ENCODE measurements at regions of chr16 and their contacts with region 1.

Region 1: GRCh38 chr16:3182608-3183444 is 5.2 kb upstream of the OR1F1 start:
- DNase-seq: peak in 1 of 2 experiments; percentile 60
- H3K4me3 ChIP-seq: peak overlapping the region; percentile 71
- H3K27ac ChIP-seq: no peak overlapping the region
- H3K4me1 ChIP-seq: 0 out of 2 replicates have a peak, but pooled peaks cover 5% of the 10 kb centered on the region
- H3K27me3 ChIP-seq: no peaks in the 10 kb centered on the region
- CTCF ChIP-seq: peak; percentile 57

Region 2: DNA sequence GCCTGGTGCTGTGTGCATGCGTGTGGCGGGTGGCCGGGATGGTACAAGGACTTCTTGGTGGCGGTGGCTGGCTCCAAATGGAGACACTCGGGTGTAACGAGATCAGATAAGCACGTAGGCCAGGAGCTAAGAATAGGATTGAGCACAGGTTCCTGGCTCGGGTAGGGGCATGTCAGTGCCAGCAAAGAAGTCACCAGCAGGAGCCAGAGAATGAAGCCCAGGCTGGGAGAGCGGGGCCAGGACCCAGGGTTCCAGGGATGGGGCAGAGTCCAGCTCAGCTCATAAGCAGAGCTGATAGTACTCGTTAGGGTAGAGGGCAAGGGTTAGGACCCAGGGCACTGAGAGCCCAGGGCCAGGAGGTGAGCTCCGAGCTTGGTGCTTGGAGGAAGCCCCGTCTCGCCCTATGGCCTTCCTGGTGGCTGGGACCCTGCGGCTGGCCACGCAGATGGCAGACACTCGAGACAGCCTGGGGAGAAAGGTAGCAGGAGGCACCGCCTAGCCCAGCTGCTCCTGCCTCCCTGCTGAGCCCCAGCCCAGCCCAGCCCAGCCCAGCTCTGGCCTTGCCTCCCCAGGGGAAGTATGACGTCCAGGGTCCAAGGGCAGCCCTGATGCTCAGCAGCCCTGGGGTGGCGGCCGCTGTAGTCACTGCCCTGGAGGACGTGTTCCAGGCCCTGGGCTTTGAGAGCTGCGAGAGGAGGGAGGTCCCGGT is 39.1 kb before region 1 on chr16:
- CTCF ChIA-PET with region 1: no interaction called
- POLR2A ChIA-PET with region 1: no interaction called
- intact Hi-C with region 1: no loop called
- DNase-seq: peak in 1 of 2 experiments; percentile 5
- H3K4me3 ChIP-seq: no peak overlapping the region
- H3K27ac ChIP-seq: no peak overlapping the region
- H3K4me1 ChIP-seq: no peaks in the 10 kb centered on the region
- H3K27me3 ChIP-seq: no peaks in the 10 kb centered on the region
- CTCF ChIP-seq: no peak

Region 3: DNA sequence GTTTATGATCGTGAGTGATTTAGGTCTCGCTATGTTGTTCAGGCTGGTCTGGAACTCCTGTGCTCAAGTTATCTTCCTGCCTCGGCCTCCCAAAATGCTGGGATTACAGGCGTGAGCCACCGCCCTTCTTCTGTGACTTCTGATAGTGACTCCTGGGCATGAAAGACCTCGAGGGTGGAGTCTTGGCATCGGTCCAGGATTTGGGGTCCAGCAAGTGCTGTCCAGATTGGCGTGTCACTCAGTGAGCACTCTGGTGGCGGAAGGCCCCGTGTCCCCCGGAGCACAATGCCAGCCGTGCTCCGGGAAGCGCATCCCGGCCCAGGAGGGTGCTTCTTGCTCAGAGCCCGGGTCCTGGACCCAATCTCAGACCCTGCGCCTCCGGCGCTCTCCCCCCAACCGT is 12.0 kb after region 1 on chr16:
- CTCF ChIA-PET with region 1: interaction called, 16 read pairs
- POLR2A ChIA-PET with region 1: no interaction called
- intact Hi-C with region 1: no loop called
- DNase-seq: no peak
- H3K4me3 ChIP-seq: no peak overlapping the region
- H3K27ac ChIP-seq: no peak overlapping the region
- H3K4me1 ChIP-seq: no peaks in the 10 kb centered on the region
- H3K27me3 ChIP-seq: no peaks in the 10 kb centered on the region; the same call in 1 of the 2 replicates
- CTCF ChIP-seq: no peak

Region 4: DNA sequence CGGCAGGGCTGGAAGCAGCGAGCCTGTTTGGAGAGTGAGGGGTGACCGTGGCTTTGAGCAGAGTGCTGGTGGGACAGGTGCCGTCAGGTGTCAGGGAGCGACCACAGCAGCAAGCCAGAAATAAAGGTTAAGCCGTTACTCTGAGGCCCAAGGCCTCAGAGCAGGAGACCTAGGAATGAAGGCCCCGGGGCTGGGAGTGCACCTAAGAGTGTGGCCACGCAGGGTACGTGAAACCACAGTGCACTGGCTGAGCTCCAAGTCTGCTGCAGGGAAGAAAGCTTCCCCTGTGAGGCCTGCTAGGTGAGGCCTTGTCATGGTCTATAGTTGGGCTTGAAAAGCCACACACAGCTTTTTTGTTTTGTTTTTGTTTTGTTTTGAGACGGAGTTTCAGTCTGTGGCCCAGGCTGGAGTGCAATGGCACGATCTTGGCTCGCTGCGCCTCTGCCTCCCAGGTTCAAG is 326.7 kb after region 1 on chr16:
- CTCF ChIA-PET with region 1: no interaction called
- POLR2A ChIA-PET with region 1: no interaction called
- intact Hi-C with region 1: loop called (anchors 10 kb)
- DNase-seq: peak; percentile 89 to 96
- H3K4me3 ChIP-seq: no peak overlapping the region
- H3K27ac ChIP-seq: 0 out of 2 replicates have a peak overlapping the region, but pooled peaks have one; percentile 3
- H3K4me1 ChIP-seq: peaks cover 23% of the 10 kb centered on the region
- H3K27me3 ChIP-seq: no peaks in the 10 kb centered on the region
- CTCF ChIP-seq: no peak